Kidney (tissue), 22 donors: ENCODE measurements at regions of chr1 and their contacts with region 1.

Region 1: GRCh38 chr1:27616441-27616840 is 12.5 kb upstream of the AHDC1 start:
- DNase-seq: no peak
- H3K4me3 ChIP-seq: no peak overlapping the region
- H3K27ac ChIP-seq: no peak overlapping the region
- H3K4me1 ChIP-seq: no peaks in the 10 kb centered on the region
- H3K27me3 ChIP-seq: no peaks in the 10 kb centered on the region
- CTCF ChIP-seq: no peak

Region 2: GRCh38 chr1:27122652-27123051 is 493.8 kb before region 1 on chr1:
- intact Hi-C with region 1: no loop called
- DNase-seq: peak in 3 of 5 donors; percentile 51 to 88 (median 72)
- H3K4me3 ChIP-seq: no peak overlapping the region
- H3K27ac ChIP-seq: no peak overlapping the region
- H3K4me1 ChIP-seq: peaks cover 0 to 10% (median 9%) of the 10 kb centered on the region in 3 donors
- H3K27me3 ChIP-seq: no peaks in the 10 kb centered on the region
- CTCF ChIP-seq: no peak

Region 3: GRCh38 chr1:27136998-27137542 is 479.4 kb before region 1 on chr1:
- intact Hi-C with region 1: no loop called
- DNase-seq: peak in 4 of 5 donors; percentile 36 to 87 (median 58)
- H3K4me3 ChIP-seq: no peak overlapping the region
- H3K27ac ChIP-seq: peak overlapping the region; percentile 56 to 77
- H3K4me1 ChIP-seq: peaks cover 0 to 24% (median 15%) of the 10 kb centered on the region in 3 donors
- H3K27me3 ChIP-seq: no peaks in the 10 kb centered on the region
- CTCF ChIP-seq: no peak

Region 4: GRCh38 chr1:27416387-27417111 is 199.9 kb before region 1 on chr1:
- intact Hi-C with region 1: loop called (anchors 10 kb)
- DNase-seq: peak in 2 of 5 donors; percentile 50 to 64
- H3K4me3 ChIP-seq: no peak overlapping the region
- H3K27ac ChIP-seq: no peak overlapping the region
- H3K4me1 ChIP-seq: peaks cover 4 to 13% (median 12%) of the 10 kb centered on the region in 3 donors
- H3K27me3 ChIP-seq: no peaks in the 10 kb centered on the region
- CTCF ChIP-seq: peak; percentile 54

Region 5: GRCh38 chr1:27662707-27663393 is 46.4 kb after region 1 on chr1:
- intact Hi-C with region 1: loop called (anchors 5 kb)
- DNase-seq: peak; percentile 89 to 93 (median 91)
- H3K4me3 ChIP-seq: no peak overlapping the region
- H3K27ac ChIP-seq: peak overlapping the region in 1 of 2 donors; percentile 5
- H3K4me1 ChIP-seq: peaks cover 0 to 10% (median 0%) of the 10 kb centered on the region in 3 donors
- H3K27me3 ChIP-seq: no peaks in the 10 kb centered on the region
- CTCF ChIP-seq: peak; percentile 98

Region 6: GRCh38 chr1:27689423-27690173 is 73.2 kb after region 1 on chr1:
- intact Hi-C with region 1: no loop called
- DNase-seq: no peak
- H3K4me3 ChIP-seq: peak overlapping the region in 1 of 3 donors; percentile 9
- H3K27ac ChIP-seq: peak overlapping the region; percentile 9 to 32
- H3K4me1 ChIP-seq: no peaks in the 10 kb centered on the region
- H3K27me3 ChIP-seq: no peaks in the 10 kb centered on the region
- CTCF ChIP-seq: no peak